ENCODE measurements at regions of chr11 and their contacts with region 1.

Region 1: GRCh38 chr11:95067039-95067840 is 521 bp downstream of the SRSF8 start:
- DNase-seq: peak; percentile 53 to 88 (median 69)
- ATAC-seq: peak; percentile 63
- H3K4me3 ChIP-seq: peak overlapping the region; percentile 95
- H3K4me3 Mint-ChIP-seq: peak overlapping the region; percentile 98
- H3K27ac ChIP-seq: peak overlapping the region; percentile 87 to 90
- H3K27ac Mint-ChIP-seq: peak overlapping the region; percentile 99
- H3K4me1 ChIP-seq: peaks cover 12% of the 10 kb centered on the region
- H3K4me1 Mint-ChIP-seq: peaks cover 38% of the 10 kb centered on the region
- H3K27me3 ChIP-seq: no peaks in the 10 kb centered on the region
- H3K27me3 Mint-ChIP-seq: no peaks in the 10 kb centered on the region
- CTCF ChIP-seq: peak; percentile 60

Region 2: GRCh38 chr11:94543695-94544645 is 523.3 kb before region 1 on chr11 and contains the start of gene FUT4:
- CTCF ChIA-PET with region 1: no interaction called
- POLR2A ChIA-PET with region 1: interaction called, 10 read pairs
- intact Hi-C with region 1: no loop called
- DNase-seq: peak; percentile 46 to 84 (median 62)
- ATAC-seq: peak; percentile 79
- H3K4me3 ChIP-seq: peak within 1 kb of the TSS; percentile 82
- H3K4me3 Mint-ChIP-seq: peak within 1 kb of the TSS; percentile 99
- H3K27ac ChIP-seq: peak within 1 kb of the TSS; percentile 61 to 93
- H3K27ac Mint-ChIP-seq: peak within 1 kb of the TSS; percentile 95
- H3K4me1 ChIP-seq: peaks cover 33% of the 10 kb centered on the region
- H3K4me1 Mint-ChIP-seq: peaks cover 51% of the 10 kb centered on the region
- H3K27me3 ChIP-seq: no peaks in the 10 kb centered on the region
- H3K27me3 Mint-ChIP-seq: no peaks in the 10 kb centered on the region
- CTCF ChIP-seq: peak; percentile 5
- total RNA-seq, gene FUT4: 4.3 to 5.1 TPM

Region 3: GRCh38 chr11:94876645-94877442 is 190.4 kb before region 1 on chr11:
- CTCF ChIA-PET with region 1: no interaction called
- POLR2A ChIA-PET with region 1: no interaction called
- intact Hi-C with region 1: no loop called
- DNase-seq: peak in 11 of 14 experiments; percentile 3 to 51 (median 15)
- ATAC-seq: no peak
- H3K4me3 ChIP-seq: no peak overlapping the region
- H3K4me3 Mint-ChIP-seq: no peak overlapping the region
- H3K27ac ChIP-seq: no peak overlapping the region
- H3K27ac Mint-ChIP-seq: no peak overlapping the region
- H3K4me1 ChIP-seq: peaks cover 7% of the 10 kb centered on the region
- H3K4me1 Mint-ChIP-seq: peaks cover 10% of the 10 kb centered on the region
- H3K27me3 ChIP-seq: no peaks in the 10 kb centered on the region
- H3K27me3 Mint-ChIP-seq: peaks cover 5% of the 10 kb centered on the region
- CTCF ChIP-seq: no peak

Region 4: DNA sequence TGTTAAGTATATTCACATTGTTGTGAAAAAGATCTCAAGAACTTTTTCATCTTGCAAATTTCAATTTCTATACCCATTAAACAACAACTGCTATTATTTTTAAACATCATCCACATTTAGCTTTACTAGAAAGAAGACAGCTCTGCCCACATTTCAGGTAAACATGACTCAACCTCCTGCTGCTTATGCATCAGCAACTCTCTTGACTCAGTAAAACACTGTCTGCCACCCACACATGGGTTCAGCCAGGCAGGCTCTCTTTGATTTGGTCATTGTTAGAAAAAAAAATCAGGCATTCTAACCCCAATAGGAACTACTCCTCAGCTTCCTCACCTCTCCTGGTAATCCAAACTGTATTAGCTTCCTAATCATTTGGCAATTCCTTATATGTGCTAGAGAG is 17.3 kb after region 1 on chr11:
- CTCF ChIA-PET with region 1: interaction called, 67 read pairs
- POLR2A ChIA-PET with region 1: interaction called, 266 read pairs
- intact Hi-C with region 1: loop called (anchors 1 kb)
- DNase-seq: no peak
- ATAC-seq: no peak
- H3K4me3 ChIP-seq: no peak overlapping the region
- H3K4me3 Mint-ChIP-seq: no peak overlapping the region
- H3K27ac ChIP-seq: no peak overlapping the region
- H3K27ac Mint-ChIP-seq: no peak overlapping the region
- H3K4me1 ChIP-seq: peaks cover 9% of the 10 kb centered on the region
- H3K4me1 Mint-ChIP-seq: peaks cover 15% of the 10 kb centered on the region
- H3K27me3 ChIP-seq: no peaks in the 10 kb centered on the region
- H3K27me3 Mint-ChIP-seq: peaks cover 7% of the 10 kb centered on the region
- CTCF ChIP-seq: no peak

Region 5: GRCh38 chr11:95545116-95545875 is 478.1 kb after region 1 on chr11:
- CTCF ChIA-PET with region 1: no interaction called
- POLR2A ChIA-PET with region 1: no interaction called
- intact Hi-C with region 1: no loop called
- DNase-seq: no peak
- ATAC-seq: no peak
- H3K4me3 ChIP-seq: no peak overlapping the region
- H3K4me3 Mint-ChIP-seq: no peak overlapping the region
- H3K27ac ChIP-seq: no peak overlapping the region
- H3K27ac Mint-ChIP-seq: no peak overlapping the region
- H3K4me1 ChIP-seq: peaks cover 7% of the 10 kb centered on the region
- H3K4me1 Mint-ChIP-seq: peaks cover 34% of the 10 kb centered on the region
- H3K27me3 ChIP-seq: no peaks in the 10 kb centered on the region
- H3K27me3 Mint-ChIP-seq: no peaks in the 10 kb centered on the region
- CTCF ChIP-seq: no peak

Region 6: GRCh38 chr11:95699631-95700470 is 632.6 kb after region 1 on chr11:
- CTCF ChIA-PET with region 1: interaction called, 12 read pairs
- POLR2A ChIA-PET with region 1: interaction called, 21 read pairs
- intact Hi-C with region 1: loop called (anchors 5 to 10 kb)
- DNase-seq: peak in 4 of 14 experiments; percentile 33 to 60 (median 52)
- ATAC-seq: peak; percentile 82
- H3K4me3 ChIP-seq: peak overlapping the region; percentile 45
- H3K4me3 Mint-ChIP-seq: peak overlapping the region; percentile 66
- H3K27ac ChIP-seq: peak overlapping the region; percentile 78 to 87
- H3K27ac Mint-ChIP-seq: peak overlapping the region; percentile 92
- H3K4me1 ChIP-seq: peaks cover 56% of the 10 kb centered on the region
- H3K4me1 Mint-ChIP-seq: peaks cover 48% of the 10 kb centered on the region
- H3K27me3 ChIP-seq: no peaks in the 10 kb centered on the region
- H3K27me3 Mint-ChIP-seq: no peaks in the 10 kb centered on the region
- CTCF ChIP-seq: no peak

Region 7: GRCh38 chr11:95764267-95764898 is 697.1 kb after region 1 on chr11:
- CTCF ChIA-PET with region 1: interaction called, 4 read pairs
- POLR2A ChIA-PET with region 1: interaction called, 6 read pairs
- intact Hi-C with region 1: loop called (anchors 1 to 5 kb)
- DNase-seq: peak in 3 of 14 experiments; percentile 73 to 76 (median 75)
- ATAC-seq: peak; percentile 91
- H3K4me3 ChIP-seq: no peak overlapping the region
- H3K4me3 Mint-ChIP-seq: no peak overlapping the region
- H3K27ac ChIP-seq: no peak overlapping the region
- H3K27ac Mint-ChIP-seq: no peak overlapping the region
- H3K4me1 ChIP-seq: no peaks in the 10 kb centered on the region
- H3K4me1 Mint-ChIP-seq: no peaks in the 10 kb centered on the region
- H3K27me3 ChIP-seq: no peaks in the 10 kb centered on the region
- H3K27me3 Mint-ChIP-seq: no peaks in the 10 kb centered on the region
- CTCF ChIP-seq: peak; percentile 80

Measured in CD4-positive, alpha-beta T cell (primary cell).